Astrocyte of the cerebellum (primary cell): ENCODE measurements at regions of chr1 and their contacts with region 1.

Region 1: DNA sequence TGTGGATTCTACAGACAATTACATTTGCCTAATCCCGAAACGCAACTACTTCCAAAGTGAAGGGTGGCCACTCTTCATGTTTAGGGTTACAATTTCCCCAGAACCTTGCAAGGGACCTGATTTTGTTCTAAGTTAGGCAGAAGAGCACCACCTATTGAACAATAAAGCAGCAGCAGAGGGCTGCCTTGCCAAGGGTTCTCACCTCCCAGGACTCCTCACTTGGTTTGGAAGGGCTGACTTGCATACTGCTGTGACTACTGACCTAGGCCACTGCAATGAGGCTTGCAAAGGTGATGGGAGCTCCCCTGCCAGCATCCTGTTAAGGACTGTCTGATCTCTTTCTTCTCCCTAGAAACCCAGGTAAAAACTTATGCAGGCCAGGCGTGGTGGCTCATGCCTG is 14.2 kb downstream of the MTOR start:
- DNase-seq: no peak
- H3K4me3 ChIP-seq: no peak overlapping the region
- CTCF ChIP-seq: no peak

Region 2: DNA sequence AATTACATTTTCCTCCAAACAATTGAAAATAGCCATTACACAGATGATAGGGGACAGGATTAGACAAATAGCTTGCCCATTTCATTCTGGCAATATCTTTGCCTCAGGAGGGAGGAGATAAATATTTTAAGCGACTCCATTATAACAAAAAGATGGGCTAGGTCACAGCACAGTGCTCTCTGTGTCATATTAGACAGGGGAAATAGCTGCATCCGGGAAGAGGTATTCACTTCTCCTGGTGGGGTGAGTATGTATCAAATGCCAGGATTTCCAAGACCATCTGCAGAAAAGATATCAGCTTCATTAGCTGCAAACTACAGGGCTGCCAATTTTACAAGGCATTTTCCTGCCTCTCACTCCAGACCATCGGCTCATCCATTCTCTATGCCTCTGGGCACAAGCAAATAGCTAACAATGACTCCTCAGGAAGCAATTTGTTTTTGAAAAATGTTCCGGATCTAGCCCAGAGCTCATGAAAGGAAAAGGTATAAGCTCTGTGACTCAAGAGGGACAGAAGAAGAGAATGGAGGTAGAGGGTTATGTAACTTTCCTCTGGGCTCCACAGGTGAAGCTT is 100.9 kb before region 1 on chr1:
- in situ Hi-C with region 1: loop called (anchors 5 kb)
- DNase-seq: no peak
- H3K4me3 ChIP-seq: no peak overlapping the region
- CTCF ChIP-seq: no peak

Region 3: DNA sequence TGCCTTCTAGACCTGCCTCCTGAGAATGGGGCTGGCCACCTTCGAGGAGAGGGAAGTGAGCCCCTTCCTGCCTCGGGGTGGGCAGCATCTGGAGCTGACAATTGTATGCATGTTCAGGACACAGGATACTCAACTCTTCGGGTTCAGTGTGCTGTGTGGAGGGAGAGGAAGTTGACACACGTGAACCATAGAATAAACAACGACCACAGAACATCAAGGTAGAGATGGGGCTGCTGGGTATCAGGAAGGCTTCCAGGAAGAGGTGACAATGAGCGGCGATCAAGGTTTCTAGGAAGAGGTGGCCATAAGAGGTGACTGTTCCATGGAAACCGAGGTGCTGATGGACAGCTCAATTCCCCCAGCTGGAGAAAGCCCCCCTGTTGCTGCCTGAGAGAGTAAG is 46.8 kb after region 1 on chr1:
- in situ Hi-C with region 1: loop called (anchors 5 kb)
- DNase-seq: no peak
- H3K4me3 ChIP-seq: no peak overlapping the region
- CTCF ChIP-seq: no peak

Region 4: DNA sequence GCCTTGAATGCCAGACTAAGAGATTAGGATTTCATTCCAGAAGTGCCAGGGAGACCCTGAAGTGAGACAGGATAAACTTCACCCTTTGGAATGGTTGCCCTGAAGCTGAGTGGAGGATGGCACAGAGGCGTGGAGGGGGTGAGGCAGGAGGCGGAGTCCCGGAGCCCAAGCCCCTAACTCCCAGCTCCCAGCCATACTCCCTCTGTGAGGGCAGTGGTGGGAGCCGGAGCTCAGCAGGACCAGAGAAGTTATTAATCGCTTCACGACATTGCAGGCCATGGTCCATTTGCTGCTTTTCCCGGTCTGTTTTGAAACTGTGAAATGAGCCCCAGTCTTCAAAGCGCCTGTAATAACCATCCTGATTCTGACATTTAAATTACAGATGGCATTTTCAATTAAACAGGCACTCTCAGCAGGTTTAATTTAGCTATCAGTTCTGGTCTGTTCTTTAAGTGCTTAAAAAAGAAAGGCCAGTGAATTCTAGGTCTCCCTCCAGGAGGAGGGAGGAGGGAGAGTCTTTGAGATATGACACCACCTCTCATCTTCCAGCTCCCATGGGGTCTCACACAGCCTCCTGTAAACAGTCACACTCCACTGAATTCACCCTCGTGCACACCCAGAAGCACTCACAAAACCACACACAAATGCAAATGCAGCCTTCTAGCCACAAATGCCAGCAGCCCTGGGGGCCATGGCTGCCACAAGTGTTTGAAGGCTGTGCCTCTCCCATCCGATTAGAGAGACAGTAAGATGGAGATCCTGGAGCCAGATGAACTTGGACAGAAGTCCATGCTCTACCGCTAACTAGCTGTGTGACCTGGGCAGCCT is 386.4 kb after region 1 on chr1:
- in situ Hi-C with region 1: loop called (anchors 5 kb)
- DNase-seq: no peak
- H3K4me3 ChIP-seq: no peak overlapping the region
- CTCF ChIP-seq: no peak

Region 5: GRCh38 chr1:11719313-11720032 is 471.3 kb after region 1 on chr1:
- in situ Hi-C with region 1: loop called (anchors 5 kb)
- DNase-seq: peak; percentile 41
- H3K4me3 ChIP-seq: peak overlapping the region; percentile 17
- CTCF ChIP-seq: peak; percentile 99